CD14-positive monocyte (primary cell): ENCODE measurements at regions of chr14 and their contacts with region 1.

Region 1: DNA sequence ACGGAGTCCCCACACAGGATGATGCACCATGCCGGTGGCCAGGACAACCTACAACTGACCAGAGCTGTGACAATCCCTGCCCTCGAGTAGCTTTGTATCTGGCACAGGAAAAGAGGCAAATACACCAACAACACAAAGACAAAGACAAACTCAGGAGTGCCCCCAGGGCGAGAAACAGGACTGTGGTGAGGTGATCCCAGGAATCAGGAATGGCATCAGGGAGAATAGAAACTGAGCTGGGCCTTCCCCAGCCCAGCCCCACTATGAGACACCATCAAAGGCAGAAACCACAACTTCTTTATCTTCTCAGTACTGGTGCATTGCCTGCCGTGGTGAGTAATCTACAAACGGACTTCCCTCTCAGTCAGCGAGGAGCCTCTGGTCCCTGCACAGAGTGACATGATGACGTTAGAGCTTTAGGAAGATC is 157.7 kb downstream of the TTC7B start:
- DNase-seq: peak; percentile 80 to 95 (median 92)
- H3K4me3 ChIP-seq: peak overlapping the region in 1 of 3 experiments; percentile 62
- H3K4me3 Mint-ChIP-seq: peak overlapping the region; percentile 50 to 86
- H3K27ac ChIP-seq: peak overlapping the region; percentile 12 to 77
- H3K27ac Mint-ChIP-seq: peak overlapping the region; percentile 84 to 96 (median 90)
- H3K4me1 ChIP-seq: peaks cover 50 to 68% of the 10 kb centered on the region in 2 donors
- H3K4me1 Mint-ChIP-seq: peaks cover 60% of the 10 kb centered on the region
- H3K27me3 ChIP-seq: no peaks in the 10 kb centered on the region
- H3K27me3 Mint-ChIP-seq: peaks cover 0 to 7% (median 4%) of the 10 kb centered on the region in 3 donors
- CTCF ChIP-seq: no peak

Region 2: DNA sequence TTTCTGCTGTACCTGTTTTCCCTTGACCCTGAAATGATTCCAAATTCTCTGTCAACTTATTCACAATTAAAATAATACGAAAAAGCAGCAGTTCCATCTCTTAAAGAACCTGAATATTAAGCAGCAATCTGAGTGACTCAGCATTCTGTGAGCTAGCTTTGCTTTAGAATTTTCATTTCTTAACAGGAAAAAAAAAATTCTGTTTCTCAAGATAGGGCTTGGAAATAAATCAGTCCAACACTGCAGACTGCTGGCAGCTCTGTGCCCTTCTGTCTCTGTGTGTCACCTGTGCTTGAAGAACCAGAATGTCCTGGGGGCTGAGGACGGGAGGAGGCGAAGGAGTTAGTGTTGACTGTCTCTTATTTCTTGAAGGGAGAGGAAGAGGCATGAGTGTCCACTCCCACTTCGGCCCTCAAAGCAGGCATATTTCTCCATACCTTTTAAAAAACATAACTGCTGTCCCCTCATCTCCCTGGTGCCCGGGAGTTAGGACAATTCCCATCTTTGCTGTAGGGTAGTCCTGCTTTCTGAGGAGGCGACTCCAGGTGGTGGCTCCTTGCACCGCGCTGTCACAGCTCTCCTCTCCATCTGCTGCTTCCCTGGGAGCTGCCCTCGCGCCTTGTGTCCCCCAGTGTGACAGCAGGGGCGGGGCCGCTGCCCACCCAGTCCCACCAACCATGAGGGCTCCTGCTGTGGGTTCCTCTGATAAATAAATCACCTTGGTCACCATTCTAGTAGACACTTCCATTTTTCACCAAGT is 58.6 kb before region 1 on chr14:
- intact Hi-C with region 1: loop called (anchors 5 to 10 kb)
- DNase-seq: peak in 1 of 3 donors; percentile 13
- H3K4me3 ChIP-seq: peak overlapping the region in 2 of 3 experiments; percentile 2 to 63
- H3K4me3 Mint-ChIP-seq: peak overlapping the region; percentile 69 to 82
- H3K27ac ChIP-seq: peak overlapping the region in 1 of 2 donors; percentile 16
- H3K27ac Mint-ChIP-seq: peak overlapping the region in 5 of 7 donors; percentile 40 to 83 (median 66)
- H3K4me1 ChIP-seq: peaks cover 4 to 19% of the 10 kb centered on the region in 2 donors
- H3K4me1 Mint-ChIP-seq: peaks cover 24% of the 10 kb centered on the region
- H3K27me3 ChIP-seq: no peaks in the 10 kb centered on the region
- H3K27me3 Mint-ChIP-seq: peaks cover 0 to 2% (median 2%) of the 10 kb centered on the region in 3 donors
- CTCF ChIP-seq: no peak

Region 3: DNA sequence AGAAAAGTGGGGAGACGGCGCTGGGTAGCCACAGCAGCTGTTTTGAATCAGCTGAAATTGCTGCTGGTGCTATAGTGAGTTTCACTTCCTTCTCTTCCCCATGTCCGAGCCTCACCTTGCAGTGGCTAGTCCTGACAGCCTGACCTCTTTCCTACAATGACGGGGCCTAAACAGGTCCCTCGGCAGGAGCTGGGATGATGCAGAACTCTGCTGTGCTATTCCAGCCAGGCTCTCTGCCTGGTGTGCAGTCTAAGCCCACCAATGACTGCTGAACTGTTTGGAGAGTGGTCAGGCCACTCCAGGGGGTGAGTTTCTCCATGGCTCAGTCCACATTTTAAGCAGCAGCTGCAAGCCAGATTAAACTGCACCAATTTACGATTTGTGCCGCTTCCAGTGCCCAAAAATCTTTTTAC is 49.6 kb before region 1 on chr14:
- intact Hi-C with region 1: loop called (anchors 5 to 10 kb)
- DNase-seq: peak; percentile 39 to 63 (median 58)
- H3K4me3 ChIP-seq: peak overlapping the region in 1 of 3 experiments; percentile 45
- H3K4me3 Mint-ChIP-seq: peak overlapping the region in 1 of 2 donors; percentile 80
- H3K27ac ChIP-seq: peak overlapping the region in 1 of 2 donors; percentile 37
- H3K27ac Mint-ChIP-seq: peak overlapping the region; percentile 54 to 87 (median 72)
- H3K4me1 ChIP-seq: peaks cover 52 to 60% of the 10 kb centered on the region in 2 donors
- H3K4me1 Mint-ChIP-seq: peaks cover 66% of the 10 kb centered on the region
- H3K27me3 ChIP-seq: no peaks in the 10 kb centered on the region
- H3K27me3 Mint-ChIP-seq: peaks cover 0 to 2% (median 0%) of the 10 kb centered on the region in 3 donors
- CTCF ChIP-seq: no peak